ENCODE measurements at regions of chr20 and their contacts with region 1.

Region 1: GRCh38 chr20:46363800-46364634 is 42.4 kb downstream of the ELMO2 start:
- DNase-seq: peak; percentile 61
- H3K4me3 ChIP-seq: peak overlapping the region; percentile 99
- CTCF ChIP-seq: no peak

Region 2: GRCh38 chr20:46400828-46401477 is 36.9 kb after region 1 on chr20:
- CTCF ChIA-PET with region 1: interaction called, 11 read pairs
- POLR2A ChIA-PET with region 1: interaction called, 13 read pairs
- DNase-seq: no peak
- H3K4me3 ChIP-seq: peak overlapping the region; percentile 29
- CTCF ChIP-seq: no peak

Region 3: GRCh38 chr20:46406199-46406985 is 42.4 kb after region 1 on chr20 and contains the start of gene ELMO2:
- CTCF ChIA-PET with region 1: interaction called, 11 read pairs
- POLR2A ChIA-PET with region 1: interaction called, 13 read pairs
- DNase-seq: peak; percentile 75
- H3K4me3 ChIP-seq: peak within 1 kb of the TSS; percentile 90
- CTCF ChIP-seq: no peak

Region 4: GRCh38 chr20:46458866-46459750 is 95.1 kb after region 1 on chr20:
- CTCF ChIA-PET with region 1: no interaction called
- POLR2A ChIA-PET with region 1: no interaction called
- DNase-seq: no peak
- H3K4me3 ChIP-seq: no peak overlapping the region
- CTCF ChIP-seq: no peak

Measured in AG04449 (cell line).